Sigmoid colon (tissue), 7 donors: ENCODE measurements at regions of chr2 and their contacts with region 1.

Region 1: DNA sequence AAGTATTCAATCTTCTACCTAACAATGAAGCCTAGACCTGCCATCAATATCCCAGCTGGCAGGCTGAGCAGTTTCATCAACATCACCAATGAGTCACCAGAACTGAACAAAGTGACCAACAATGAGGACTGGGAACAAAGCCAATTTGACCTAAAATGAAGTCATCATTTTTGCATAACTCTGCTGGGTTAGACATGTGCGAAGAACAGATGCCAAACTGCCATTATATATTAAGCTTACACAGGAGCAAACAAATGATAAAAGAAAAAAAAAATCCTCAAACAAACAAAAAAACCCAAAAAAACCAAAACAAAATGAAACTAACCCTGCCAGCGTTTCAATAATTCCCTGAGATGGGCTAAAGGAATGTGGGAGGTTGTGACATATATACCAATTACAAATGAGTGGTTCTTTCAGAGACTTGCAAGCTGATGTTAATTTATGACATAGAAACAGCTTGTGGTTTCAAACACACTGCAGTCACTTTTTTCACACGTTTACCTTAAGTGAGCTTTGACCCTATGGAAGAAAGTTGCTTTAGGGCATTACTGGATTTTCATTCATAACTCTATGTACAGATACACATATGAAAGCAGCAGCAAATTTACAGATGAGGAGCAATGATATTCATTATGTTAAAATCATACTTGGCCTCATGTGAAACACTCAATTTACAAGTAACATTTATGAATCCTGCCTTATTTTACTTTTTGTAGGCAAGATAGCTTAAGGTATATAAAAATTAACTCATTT is 56.9 kb upstream of the CCDC141 start:
- DNase-seq: peak; percentile 70
- H3K4me3 ChIP-seq: no peak overlapping the region
- H3K27ac ChIP-seq: peak overlapping the region in 3 of 4 donors; percentile 60 to 78 (median 69)
- H3K4me1 ChIP-seq: peaks cover 0 to 44% (median 30%) of the 10 kb centered on the region in 4 donors
- H3K27me3 ChIP-seq: no peaks in the 10 kb centered on the region
- CTCF ChIP-seq: no peak
- EP300 ChIP-seq: no peak
- POLR2A ChIP-seq: no peak

Region 2: DNA sequence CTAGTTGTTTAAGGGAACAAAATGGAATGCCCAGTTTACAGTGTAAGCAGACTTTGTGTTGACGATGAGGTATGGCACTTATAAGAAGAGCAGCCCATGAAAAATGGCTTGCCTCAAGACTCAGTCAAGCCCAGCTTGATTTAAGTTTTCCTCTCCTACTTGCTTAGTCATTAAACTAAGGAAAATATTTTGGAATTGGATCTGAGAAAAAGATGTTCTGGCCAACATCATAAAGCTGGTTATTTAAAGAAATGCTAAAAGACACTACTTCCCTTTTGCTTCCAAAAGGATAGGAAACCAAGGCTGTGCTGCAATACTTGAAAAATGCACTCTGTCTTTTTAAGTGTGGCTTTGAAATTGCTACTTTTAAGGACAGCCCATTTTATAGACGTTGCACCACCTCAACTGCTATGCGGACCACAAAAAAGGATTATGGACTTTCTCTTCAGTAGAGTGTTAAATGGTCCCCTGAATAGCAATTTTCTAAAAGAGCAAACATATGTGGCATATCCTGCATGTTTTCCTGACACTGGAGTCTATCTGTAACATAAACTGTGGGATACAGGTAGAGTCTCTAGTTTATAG is 89.0 kb before region 1 on chr2:
- intact Hi-C with region 1: loop called (anchors 10 kb)
- DNase-seq: no peak
- H3K4me3 ChIP-seq: no peak overlapping the region
- H3K27ac ChIP-seq: no peak overlapping the region
- H3K4me1 ChIP-seq: peaks cover 0 to 12% (median 0%) of the 10 kb centered on the region in 4 donors
- H3K27me3 ChIP-seq: no peaks in the 10 kb centered on the region
- CTCF ChIP-seq: no peak
- EP300 ChIP-seq: peak in 1 of 4 donors; percentile 11
- POLR2A ChIP-seq: no peak

Region 3: DNA sequence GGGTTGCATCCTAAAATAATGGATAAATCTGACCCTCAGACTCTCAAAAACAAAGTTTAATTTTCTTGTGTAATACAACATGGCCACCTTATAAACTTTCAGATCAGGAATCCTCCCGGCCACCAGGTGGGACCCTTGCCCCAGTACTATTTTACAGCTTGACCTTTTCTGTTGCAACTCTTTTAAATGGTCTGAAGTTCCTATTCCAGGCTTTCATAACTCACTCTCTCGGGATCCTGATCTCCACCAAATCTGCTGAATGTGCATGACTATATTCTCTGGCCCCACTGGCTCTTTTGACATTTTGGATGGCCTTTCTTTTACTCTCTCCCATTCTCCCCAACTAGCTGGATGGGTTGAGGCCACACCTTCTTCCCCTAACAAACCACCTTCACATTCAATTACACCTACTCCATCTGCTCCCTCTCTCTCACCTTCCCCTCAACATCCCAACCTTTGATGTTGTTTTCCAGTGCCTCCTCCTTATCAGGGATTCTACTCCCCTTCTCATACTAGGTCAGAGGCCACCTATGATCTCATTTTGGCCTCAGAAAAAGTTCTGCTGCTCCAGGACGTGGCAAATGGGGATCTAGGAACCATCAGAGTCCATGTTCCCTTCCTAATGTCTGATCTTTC is 87.0 kb after region 1 on chr2:
- intact Hi-C with region 1: no loop called
- DNase-seq: no peak
- H3K4me3 ChIP-seq: no peak overlapping the region
- H3K27ac ChIP-seq: no peak overlapping the region
- H3K4me1 ChIP-seq: peaks cover 0 to 24% (median 2%) of the 10 kb centered on the region in 4 donors
- H3K27me3 ChIP-seq: no peaks in the 10 kb centered on the region
- CTCF ChIP-seq: no peak
- EP300 ChIP-seq: no peak
- POLR2A ChIP-seq: no peak